ENCODE measurements at regions of chrX and their contacts with region 1.

Region 1: GRCh38 chrX:49269010-49269767 is 404 bp upstream of the PPP1R3F start:
- DNase-seq: peak; percentile 97
- ATAC-seq: peak; percentile 80
- H3K4me3 Mint-ChIP-seq: peak overlapping the region; percentile 78
- H3K27ac Mint-ChIP-seq: peak overlapping the region; percentile 98
- H3K4me1 Mint-ChIP-seq: peaks cover 50% of the 10 kb centered on the region
- H3K27me3 Mint-ChIP-seq: no peaks in the 10 kb centered on the region

Region 2: DNA sequence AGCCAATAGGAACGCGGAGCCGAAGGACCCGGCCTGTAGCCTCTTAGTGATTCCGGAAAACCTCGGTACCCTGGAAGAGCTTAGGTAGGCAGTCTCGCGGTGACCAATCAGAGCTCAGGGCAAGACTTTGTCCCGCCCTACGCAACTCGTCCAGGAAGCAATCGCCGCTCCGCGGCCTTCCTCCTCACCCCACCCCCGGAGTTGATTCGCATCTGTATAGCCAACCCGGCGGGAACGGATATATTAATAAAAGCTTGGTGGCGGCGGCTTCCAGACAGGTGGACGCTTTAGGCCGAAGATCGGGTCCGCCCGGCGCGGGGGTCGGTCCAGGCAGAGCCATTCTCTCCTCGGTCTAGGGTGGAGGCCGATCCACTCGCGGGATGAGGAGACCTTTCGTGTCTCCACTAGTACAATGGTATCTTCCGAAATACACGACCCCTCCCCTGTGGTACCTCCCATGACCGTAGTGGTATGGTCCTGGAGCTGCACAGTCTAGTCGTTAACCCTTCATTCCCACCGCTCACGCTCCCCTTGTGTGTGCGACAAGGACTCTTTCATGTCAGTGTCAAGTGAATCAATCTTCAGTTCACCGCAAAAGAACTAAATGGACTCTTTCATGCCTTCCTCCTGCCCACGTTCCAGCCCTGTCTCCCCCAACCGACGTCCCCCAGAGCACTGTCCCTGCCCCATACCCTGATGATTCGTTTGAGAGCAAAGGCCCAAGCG is 531.8 kb before region 1 on chrX:
- CTCF ChIA-PET with region 1: no interaction called
- POLR2A ChIA-PET with region 1: no interaction called
- intact Hi-C with region 1: loop called in 1 of 2 experiments (anchors 5 kb)
- DNase-seq: peak; percentile 92
- ATAC-seq: peak; percentile 96
- H3K4me3 Mint-ChIP-seq: peak overlapping the region; percentile 97
- H3K27ac Mint-ChIP-seq: peak overlapping the region; percentile 99
- H3K4me1 Mint-ChIP-seq: peaks cover 20% of the 10 kb centered on the region
- H3K27me3 Mint-ChIP-seq: no peaks in the 10 kb centered on the region

Region 3: GRCh38 chrX:48957827-48958634 is 311.2 kb before region 1 on chrX:
- CTCF ChIA-PET with region 1: no interaction called
- POLR2A ChIA-PET with region 1: no interaction called
- intact Hi-C with region 1: loop called in 1 of 2 experiments (anchors 1 kb)
- DNase-seq: peak; percentile 95
- ATAC-seq: peak; percentile 92
- H3K4me3 Mint-ChIP-seq: peak overlapping the region; percentile 93
- H3K27ac Mint-ChIP-seq: peak overlapping the region; percentile 100
- H3K4me1 Mint-ChIP-seq: peaks cover 28% of the 10 kb centered on the region
- H3K27me3 Mint-ChIP-seq: no peaks in the 10 kb centered on the region

Region 4: GRCh38 chrX:49073601-49074571 is 195.3 kb before region 1 on chrX and contains the start of gene PRAF2:
- CTCF ChIA-PET with region 1: no interaction called
- POLR2A ChIA-PET with region 1: no interaction called
- intact Hi-C with region 1: loop called in 1 of 2 experiments (anchors 10 kb)
- DNase-seq: peak; percentile 94
- ATAC-seq: peak; percentile 98
- H3K4me3 Mint-ChIP-seq: peak within 1 kb of the TSS; percentile 78
- H3K27ac Mint-ChIP-seq: peak within 1 kb of the TSS; percentile 73
- H3K4me1 Mint-ChIP-seq: peaks cover 19% of the 10 kb centered on the region
- H3K27me3 Mint-ChIP-seq: no peaks in the 10 kb centered on the region
- total RNA-seq, gene PRAF2: 9.1 to 11.5 TPM

Region 5: DNA sequence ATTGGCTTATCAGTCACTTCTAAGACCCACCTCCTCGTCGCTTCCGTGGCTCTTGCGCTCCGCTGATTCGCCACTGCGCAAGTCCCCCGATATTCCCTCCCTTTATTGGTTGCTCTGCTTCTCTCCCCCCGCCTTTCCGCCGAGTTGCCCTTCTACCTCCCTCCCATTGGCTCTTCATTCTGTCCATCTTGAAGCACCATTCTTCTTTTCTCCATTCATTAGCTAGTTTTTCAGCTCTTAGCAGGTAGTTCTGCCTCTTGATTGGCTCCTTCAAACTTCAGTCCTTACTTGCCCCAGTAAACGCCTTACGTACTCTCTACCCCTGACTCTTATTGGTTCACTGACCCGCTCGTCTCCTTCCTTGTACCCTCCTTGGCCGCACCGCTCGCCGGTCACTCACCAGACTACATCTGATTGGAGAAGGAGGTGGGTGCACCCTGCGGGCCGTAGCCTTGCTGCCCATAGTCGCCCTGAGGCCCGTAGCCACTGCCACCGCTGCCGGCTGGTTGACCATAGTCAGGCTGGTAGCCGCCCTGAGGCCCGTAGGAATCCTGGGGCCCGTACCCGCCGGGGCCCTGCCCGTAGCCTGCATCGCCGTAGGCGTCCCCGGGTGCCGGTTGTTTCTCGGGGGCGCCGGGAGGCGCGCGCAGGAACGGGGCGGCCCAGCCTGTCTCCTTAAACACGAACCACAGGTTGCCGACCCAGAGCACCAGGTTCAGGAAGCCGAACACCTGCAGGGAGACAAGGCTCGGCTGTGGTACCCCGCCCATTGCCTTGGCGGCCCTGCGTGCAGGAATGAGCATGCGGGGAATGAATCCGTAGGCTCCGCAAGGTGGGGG is 77.9 kb before region 1 on chrX:
- CTCF ChIA-PET with region 1: interaction called, 5 read pairs
- POLR2A ChIA-PET with region 1: interaction called, 5 read pairs
- intact Hi-C with region 1: loop called (anchors 1 to 5 kb)
- DNase-seq: peak; percentile 89
- ATAC-seq: peak; percentile 91
- H3K4me3 Mint-ChIP-seq: peak overlapping the region; percentile 96
- H3K27ac Mint-ChIP-seq: peak overlapping the region; percentile 97
- H3K4me1 Mint-ChIP-seq: peaks cover 23% of the 10 kb centered on the region
- H3K27me3 Mint-ChIP-seq: no peaks in the 10 kb centered on the region

Region 6: DNA sequence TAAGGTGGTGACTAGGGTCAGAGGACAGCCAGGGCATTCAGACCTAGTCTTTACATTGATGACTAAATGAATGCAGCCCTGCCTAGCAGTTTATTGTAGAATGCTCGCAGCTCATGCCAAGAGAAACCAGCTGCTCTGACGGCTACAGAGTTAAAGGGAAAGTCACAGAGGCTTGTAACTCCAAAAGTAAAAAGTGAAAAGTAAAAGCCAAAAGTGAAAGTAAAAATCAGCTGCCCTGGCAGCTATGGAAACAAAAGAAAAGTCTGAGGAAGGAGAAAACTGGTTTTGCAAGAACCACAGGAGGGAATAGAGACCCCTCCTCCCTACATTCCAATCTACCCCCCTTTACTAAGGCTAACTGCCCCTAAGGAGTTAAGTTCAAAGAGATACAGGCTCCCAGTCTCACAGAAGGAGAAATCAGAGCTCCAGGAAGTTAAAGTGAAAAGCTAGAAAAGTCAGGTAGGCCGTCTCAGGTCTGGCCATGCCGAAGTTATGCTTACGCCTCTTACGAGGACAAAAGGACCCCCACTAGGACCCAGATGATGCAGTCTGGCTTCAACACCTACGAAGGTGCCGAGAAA is 40.3 kb after region 1 on chrX:
- CTCF ChIA-PET with region 1: no interaction called
- POLR2A ChIA-PET with region 1: interaction called, 3 read pairs
- intact Hi-C with region 1: loop called in 1 of 2 experiments (anchors 1 kb)
- DNase-seq: peak; percentile 30
- ATAC-seq: peak; percentile 72
- H3K4me3 Mint-ChIP-seq: peak overlapping the region; percentile 70
- H3K27ac Mint-ChIP-seq: peak overlapping the region; percentile 95
- H3K4me1 Mint-ChIP-seq: peaks cover 20% of the 10 kb centered on the region
- H3K27me3 Mint-ChIP-seq: no peaks in the 10 kb centered on the region

Measured in activated CD4-positive, alpha-beta T cell treated with anti-CD3 and anti-CD28 coated beads for 36 hours (primary cell).